Heart right ventricle (tissue), 16 donors: ENCODE measurements at regions of chr3 and their contacts with region 1.

Region 1: DNA sequence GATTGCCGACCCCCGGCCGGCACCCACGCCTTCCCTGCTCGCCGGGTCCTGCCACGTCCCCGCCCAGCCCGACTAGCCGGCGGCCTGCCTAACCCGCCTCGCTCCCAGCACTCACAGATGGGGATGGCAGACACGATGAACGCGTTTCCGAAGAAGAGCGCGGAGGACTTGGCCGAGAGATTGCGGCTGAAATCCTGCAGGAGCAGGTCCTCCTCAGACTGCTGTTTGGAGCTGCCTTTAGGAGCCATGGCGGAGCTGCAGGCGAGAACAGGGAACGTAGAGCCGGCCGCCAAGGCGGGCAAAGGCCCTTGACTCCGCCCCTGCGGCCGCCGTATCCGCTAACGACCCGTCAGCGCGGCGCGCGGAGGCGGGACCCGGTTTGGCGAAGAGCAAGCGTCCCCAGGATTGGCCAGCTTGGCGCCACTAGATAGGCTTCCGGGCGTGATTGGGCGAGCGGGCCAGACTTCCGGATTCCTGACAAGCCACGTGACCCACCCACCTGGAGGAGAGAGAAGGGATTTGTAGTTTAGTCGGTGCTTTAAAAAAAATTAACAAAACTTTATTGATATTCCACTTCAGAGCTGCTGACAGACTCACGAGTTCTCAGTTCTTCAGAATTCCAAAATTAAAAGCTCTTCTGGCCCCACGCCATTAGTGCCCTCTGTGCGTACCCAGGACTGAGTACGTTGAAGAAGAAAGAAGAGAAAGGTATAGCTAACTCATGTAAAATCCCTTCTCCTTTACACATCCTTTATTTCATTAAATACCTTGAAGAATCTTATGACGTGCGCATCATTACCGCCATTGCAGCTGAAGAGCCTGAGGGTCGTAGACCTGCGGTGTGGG is at the start of gene SSR3:
- DNase-seq: peak; percentile 99
- ATAC-seq: peak; percentile 99 to 100 (median 100)
- H3K4me3 ChIP-seq: peak within 1 kb of the TSS; percentile 63 to 96 (median 80)
- H3K27ac ChIP-seq: peak within 1 kb of the TSS; percentile 76 to 97 (median 92)
- H3K4me1 ChIP-seq: peaks cover 0 to 64% (median 45%) of the 10 kb centered on the region in 9 donors
- H3K27me3 ChIP-seq: no peaks in the 10 kb centered on the region
- CTCF ChIP-seq: peak in 5 of 9 donors; percentile 11 to 41 (median 25)
- total RNA-seq, gene SSR3: 172 to 256 (median 216) TPM

Region 2: GRCh38 chr3:156605686-156606605 is 50.9 kb after region 1 on chr3:
- intact Hi-C with region 1: loop called in 3 of 10 experiments (anchors 1 to 5 kb)
- DNase-seq: peak; percentile 42 to 48
- ATAC-seq: peak; percentile 82 to 93 (median 88)
- H3K4me3 ChIP-seq: peak overlapping the region; percentile 26 to 54 (median 50)
- H3K27ac ChIP-seq: peak overlapping the region; percentile 41 to 86 (median 73)
- H3K4me1 ChIP-seq: peaks cover 0 to 24% (median 9%) of the 10 kb centered on the region in 9 donors
- H3K27me3 ChIP-seq: no peaks in the 10 kb centered on the region
- CTCF ChIP-seq: no peak

Region 3: GRCh38 chr3:156816800-156817645 is 262.0 kb after region 1 on chr3:
- intact Hi-C with region 1: loop called in 3 of 10 experiments (anchors 5 to 10 kb)
- DNase-seq: peak; percentile 74 to 88
- ATAC-seq: peak; percentile 90 to 96 (median 93)
- H3K4me3 ChIP-seq: peak overlapping the region; percentile 54 to 73 (median 64)
- H3K27ac ChIP-seq: peak overlapping the region; percentile 79 to 94 (median 82)
- H3K4me1 ChIP-seq: peaks cover 0 to 28% (median 17%) of the 10 kb centered on the region in 9 donors
- H3K27me3 ChIP-seq: no peaks in the 10 kb centered on the region
- CTCF ChIP-seq: peak in 3 of 9 donors; percentile 12 to 41 (median 26)

Region 4: DNA sequence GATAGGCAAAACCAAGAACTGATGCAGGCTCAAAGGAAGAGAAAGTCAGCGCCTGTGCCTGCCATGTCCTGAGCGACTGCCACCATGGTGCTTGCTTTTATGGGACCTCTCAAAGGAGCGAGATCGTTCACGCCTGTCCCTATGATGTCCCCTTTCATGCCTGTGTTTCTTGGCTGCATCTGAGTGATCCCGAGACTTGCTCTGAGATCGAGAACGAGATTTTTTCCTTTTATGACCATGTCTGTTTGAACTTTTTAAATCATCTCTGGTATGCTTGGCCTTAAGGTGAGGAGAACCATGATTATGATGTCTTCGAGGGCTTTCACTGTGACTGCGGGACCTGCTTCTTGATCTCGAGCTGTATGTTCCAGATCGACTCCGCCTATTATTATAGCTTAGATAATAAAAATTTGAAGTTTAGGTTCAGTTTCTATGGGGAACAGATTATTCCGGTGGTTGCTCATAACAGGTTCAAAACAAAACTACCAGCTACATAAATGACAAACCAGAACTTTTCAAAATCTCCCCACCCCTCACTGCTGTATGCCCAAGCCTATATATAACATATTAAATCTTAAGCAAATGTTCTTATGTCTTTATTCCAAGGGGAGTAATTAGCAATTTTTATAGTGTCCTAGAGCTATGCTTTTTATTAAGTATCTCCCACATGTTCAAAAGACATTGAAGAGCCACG is 593.3 kb after region 1 on chr3:
- intact Hi-C with region 1: loop called in 1 of 10 experiments (anchors 10 kb)
- DNase-seq: no peak
- ATAC-seq: no peak
- H3K4me3 ChIP-seq: no peak overlapping the region
- H3K27ac ChIP-seq: no peak overlapping the region
- H3K4me1 ChIP-seq: peaks cover 0 to 11% (median 3%) of the 10 kb centered on the region in 9 donors
- H3K27me3 ChIP-seq: no peaks in the 10 kb centered on the region
- CTCF ChIP-seq: no peak